ENCODE measurements at regions of chr22 and their contacts with region 1.

Region 1: DNA sequence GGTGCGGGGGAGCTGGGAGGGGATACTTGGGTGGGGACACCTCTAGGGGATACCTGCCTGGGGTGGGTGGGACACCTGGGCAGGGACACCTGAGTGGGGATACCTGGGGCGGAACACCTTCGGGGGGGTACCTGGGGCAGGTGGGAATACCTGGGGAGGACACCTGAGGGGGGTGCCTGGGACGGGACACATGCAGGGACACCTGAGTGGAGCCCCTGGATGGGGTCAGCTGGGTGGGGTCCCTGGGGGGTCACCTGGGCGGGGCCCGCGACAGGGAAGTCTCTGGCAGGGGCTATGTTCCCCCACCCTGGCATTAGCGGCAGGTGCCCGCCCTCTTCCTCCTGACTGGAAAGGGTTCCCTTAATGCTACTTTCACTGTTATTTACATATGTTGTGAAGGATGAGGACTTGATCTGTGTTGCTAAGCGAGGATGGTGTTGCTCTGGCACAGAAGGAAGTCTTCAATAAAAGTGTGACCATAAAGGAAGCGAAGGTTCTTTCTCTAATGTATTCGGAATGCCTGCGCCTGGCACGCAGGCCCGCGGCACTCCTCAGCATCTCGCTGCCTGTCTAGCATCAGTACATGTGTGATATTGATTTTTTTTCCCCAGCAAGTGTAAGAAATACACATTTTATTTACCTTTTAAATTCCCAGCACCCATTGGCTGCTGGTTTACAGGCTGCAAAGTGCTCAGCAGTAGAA is 801.7 kb downstream of the BRD1 start:
- DNase-seq: no peak
- H3K4me3 ChIP-seq: no peak overlapping the region
- H3K27ac ChIP-seq: no peak overlapping the region
- H3K4me1 ChIP-seq: no peaks in the 10 kb centered on the region
- CTCF ChIP-seq: no peak

Region 2: GRCh38 chr22:48886604-48887393 is 139.1 kb before region 1 on chr22:
- CTCF ChIA-PET with region 1: no interaction called
- POLR2A ChIA-PET with region 1: no interaction called
- intact Hi-C with region 1: no loop called
- DNase-seq: no peak
- H3K4me3 ChIP-seq: no peak overlapping the region
- H3K27ac ChIP-seq: no peak overlapping the region
- H3K4me1 ChIP-seq: no peaks in the 10 kb centered on the region
- CTCF ChIP-seq: no peak

Region 3: DNA sequence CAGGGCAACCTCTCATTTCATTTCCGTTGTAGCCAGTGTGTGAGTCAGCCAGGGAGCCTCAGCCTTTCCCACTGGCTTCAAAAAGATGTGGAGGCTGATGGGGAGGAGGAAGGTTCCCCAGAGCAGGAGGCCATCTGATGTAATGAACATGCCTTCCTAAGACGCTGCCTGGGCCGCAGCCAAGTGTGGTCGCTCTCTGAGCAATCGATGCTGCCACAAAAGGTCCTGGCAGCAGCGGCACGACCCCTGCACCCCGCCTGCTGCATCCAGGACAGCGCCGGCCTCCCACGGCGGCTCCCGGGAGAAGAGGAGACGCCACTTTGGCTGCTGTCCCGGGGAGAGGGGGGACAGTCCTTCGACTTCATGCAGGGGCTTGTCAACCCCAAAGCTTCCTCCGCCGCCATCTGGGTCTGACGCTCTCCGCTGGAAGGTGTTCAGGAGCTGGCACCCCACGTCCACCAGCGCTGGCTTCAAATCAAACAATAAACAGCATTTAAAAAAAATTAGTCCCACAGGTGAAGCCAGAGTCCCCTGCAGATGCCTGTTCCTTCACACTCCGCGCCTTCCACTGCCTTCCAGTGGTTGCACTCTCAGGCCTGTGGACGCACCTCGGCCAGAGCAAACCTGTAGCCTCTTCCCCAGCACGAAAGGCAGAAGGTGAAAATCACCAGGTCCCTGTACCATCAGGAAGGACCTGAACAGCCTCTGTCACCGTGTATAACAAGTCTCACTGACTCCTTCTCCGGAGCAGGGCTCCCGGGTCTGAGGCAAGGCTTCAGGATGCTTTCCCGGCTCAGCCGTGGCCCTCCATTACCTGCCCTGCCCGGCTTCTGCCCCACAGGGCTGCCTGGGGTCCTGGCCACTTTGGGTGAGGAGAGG is 128.9 kb before region 1 on chr22:
- CTCF ChIA-PET with region 1: no interaction called
- POLR2A ChIA-PET with region 1: no interaction called
- intact Hi-C with region 1: no loop called
- DNase-seq: no peak
- H3K4me3 ChIP-seq: no peak overlapping the region
- H3K27ac ChIP-seq: no peak overlapping the region
- H3K4me1 ChIP-seq: no peaks in the 10 kb centered on the region
- CTCF ChIP-seq: no peak

Region 4: GRCh38 chr22:49011769-49012648 is 13.9 kb before region 1 on chr22:
- CTCF ChIA-PET with region 1: no interaction called
- POLR2A ChIA-PET with region 1: no interaction called
- intact Hi-C with region 1: no loop called
- DNase-seq: no peak
- H3K4me3 ChIP-seq: no peak overlapping the region
- H3K27ac ChIP-seq: no peak overlapping the region
- H3K4me1 ChIP-seq: no peaks in the 10 kb centered on the region
- CTCF ChIP-seq: no peak

Region 5: DNA sequence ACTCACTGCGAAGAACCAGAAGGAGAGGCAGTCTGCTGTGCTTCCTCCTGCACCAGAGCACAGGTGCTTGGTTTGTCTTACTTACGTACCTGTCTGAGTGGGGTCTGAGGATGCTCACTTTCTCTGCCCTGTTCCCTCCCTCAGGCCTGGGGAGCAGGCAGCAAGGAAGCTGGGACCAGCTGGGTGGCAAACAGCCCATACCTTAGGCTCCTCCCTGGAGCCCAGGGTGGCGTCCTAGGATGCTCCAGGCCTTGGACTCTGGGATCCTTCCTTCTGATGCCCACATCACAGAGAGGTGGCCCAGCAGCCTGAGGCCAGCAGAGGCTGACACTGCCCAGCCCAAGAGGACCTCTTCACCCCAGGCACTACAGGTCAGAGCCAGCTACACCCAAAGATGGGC is 208.5 kb after region 1 on chr22:
- CTCF ChIA-PET with region 1: interaction called, 10 read pairs
- POLR2A ChIA-PET with region 1: no interaction called
- intact Hi-C with region 1: no loop called
- DNase-seq: no peak
- H3K4me3 ChIP-seq: no peak overlapping the region
- H3K27ac ChIP-seq: no peak overlapping the region
- H3K4me1 ChIP-seq: no peaks in the 10 kb centered on the region
- CTCF ChIP-seq: no peak

Measured in OCI-LY7 (cell line).